ENCODE measurements at regions of chr6 and their contacts with region 1.

Region 1: DNA sequence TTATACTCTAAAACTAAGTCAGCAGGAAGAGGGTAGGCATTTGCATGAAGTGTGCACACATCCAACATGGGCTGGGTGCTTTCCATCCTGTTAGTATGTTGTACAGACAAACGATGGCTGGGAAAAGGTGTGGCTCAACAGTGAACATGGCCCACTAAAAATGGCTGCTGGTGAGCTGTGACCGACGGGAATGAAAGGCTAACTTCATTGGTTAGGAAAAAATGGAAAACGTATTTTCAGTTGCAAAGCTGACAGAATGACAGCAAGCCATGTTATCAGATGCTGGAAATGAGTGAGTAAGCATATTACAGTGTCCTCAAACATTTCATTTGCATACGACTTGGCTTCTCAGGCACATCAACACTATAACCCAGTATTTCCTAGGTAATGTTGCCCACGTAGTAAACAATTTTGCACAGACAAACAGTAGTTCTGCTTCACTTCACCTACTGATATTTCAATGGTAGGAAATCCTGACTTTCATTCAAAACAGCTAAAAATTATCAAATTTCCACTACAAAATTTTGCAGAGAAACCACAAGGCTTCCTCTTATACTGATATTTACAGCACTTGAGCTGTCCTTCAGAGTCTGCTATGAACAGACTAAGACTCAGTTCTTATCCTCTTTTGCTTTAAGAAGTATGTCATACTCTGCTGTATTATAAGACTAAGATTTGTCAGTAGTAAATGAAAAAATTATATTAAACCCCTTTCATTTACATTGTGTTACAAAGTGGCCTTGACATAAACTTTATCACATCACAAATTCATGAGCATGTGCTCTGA is 98.9 kb downstream of the IRF4 start:
- DNase-seq: no peak
- H3K4me3 Mint-ChIP-seq: peak overlapping the region; percentile 46
- H3K27ac Mint-ChIP-seq: peak overlapping the region; percentile 99
- H3K4me1 Mint-ChIP-seq: peaks cover 84% of the 10 kb centered on the region
- H3K27me3 Mint-ChIP-seq: no peaks in the 10 kb centered on the region

Region 2: GRCh38 chr6:188821-189655 is 301.4 kb before region 1 on chr6:
- intact Hi-C with region 1: loop called (anchors 2 kb)
- DNase-seq: peak; percentile 77
- H3K4me3 Mint-ChIP-seq: peak overlapping the region; percentile 20
- H3K27ac Mint-ChIP-seq: peak overlapping the region; percentile 71
- H3K4me1 Mint-ChIP-seq: peaks cover 46% of the 10 kb centered on the region
- H3K27me3 Mint-ChIP-seq: no peaks in the 10 kb centered on the region

Region 3: GRCh38 chr6:291697-292505 is 198.5 kb before region 1 on chr6 and contains the start of gene DUSP22:
- intact Hi-C with region 1: loop called (anchors 5 kb)
- DNase-seq: peak; percentile 78
- H3K4me3 Mint-ChIP-seq: peak within 1 kb of the TSS; percentile 91
- H3K27ac Mint-ChIP-seq: peak within 1 kb of the TSS; percentile 95
- H3K4me1 Mint-ChIP-seq: peaks cover 45% of the 10 kb centered on the region
- H3K27me3 Mint-ChIP-seq: no peaks in the 10 kb centered on the region
- total RNA-seq, gene DUSP22: 27.5 and 28.6 TPM in 2 replicates

Region 4: GRCh38 chr6:399785-400534 is 90.5 kb before region 1 on chr6:
- intact Hi-C with region 1: loop called (anchors 2 kb)
- DNase-seq: peak; percentile 57
- H3K4me3 Mint-ChIP-seq: peak overlapping the region; percentile 72
- H3K27ac Mint-ChIP-seq: peak overlapping the region; percentile 78
- H3K4me1 Mint-ChIP-seq: peaks cover 86% of the 10 kb centered on the region
- H3K27me3 Mint-ChIP-seq: no peaks in the 10 kb centered on the region

Region 5: GRCh38 chr6:431986-432385 is 58.5 kb before region 1 on chr6:
- intact Hi-C with region 1: loop called (anchors 1 kb)
- DNase-seq: peak; percentile 69
- H3K4me3 Mint-ChIP-seq: no peak overlapping the region
- H3K27ac Mint-ChIP-seq: peak overlapping the region; percentile 64
- H3K4me1 Mint-ChIP-seq: peaks cover 80% of the 10 kb centered on the region
- H3K27me3 Mint-ChIP-seq: no peaks in the 10 kb centered on the region

Region 6: DNA sequence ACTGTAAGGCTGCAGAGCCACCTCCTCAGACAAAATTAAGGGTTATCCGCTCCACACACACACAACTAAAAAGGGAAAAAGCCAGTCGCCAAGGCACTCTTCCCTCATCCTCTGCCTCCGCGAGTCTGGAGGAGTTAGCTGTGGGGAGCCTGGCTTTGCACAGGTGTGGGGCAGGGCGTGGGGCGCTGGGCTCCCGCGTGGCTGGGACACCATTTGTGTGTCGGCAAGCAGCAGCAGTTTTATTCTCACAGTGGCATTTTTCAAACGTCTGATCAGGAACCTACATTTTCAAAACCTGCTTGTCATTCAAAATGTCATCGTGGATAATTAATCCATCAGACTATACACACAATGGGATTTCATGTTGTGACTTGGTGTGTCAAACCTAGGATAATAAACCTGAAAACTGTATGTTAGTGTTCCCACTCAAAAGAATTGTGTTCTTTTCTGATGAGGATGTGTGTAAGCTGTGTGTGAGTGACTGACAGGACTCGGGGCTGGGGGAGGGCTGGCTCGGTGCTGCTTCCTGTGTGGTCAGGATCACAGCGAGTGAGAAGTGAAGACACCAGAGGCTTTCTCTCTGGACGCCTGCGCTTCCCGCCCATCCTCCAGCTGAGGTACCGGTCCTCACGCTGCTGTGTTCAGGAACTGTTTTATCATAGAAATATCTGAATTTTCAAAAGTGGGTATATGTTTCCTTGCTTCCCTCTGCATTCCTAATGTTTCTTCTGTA is 15.8 kb before region 1 on chr6:
- intact Hi-C with region 1: loop called (anchors 1 kb)
- DNase-seq: peak; percentile 77
- H3K4me3 Mint-ChIP-seq: peak overlapping the region; percentile 71
- H3K27ac Mint-ChIP-seq: peak overlapping the region; percentile 83
- H3K4me1 Mint-ChIP-seq: peaks cover 67% of the 10 kb centered on the region
- H3K27me3 Mint-ChIP-seq: no peaks in the 10 kb centered on the region

Region 7: DNA sequence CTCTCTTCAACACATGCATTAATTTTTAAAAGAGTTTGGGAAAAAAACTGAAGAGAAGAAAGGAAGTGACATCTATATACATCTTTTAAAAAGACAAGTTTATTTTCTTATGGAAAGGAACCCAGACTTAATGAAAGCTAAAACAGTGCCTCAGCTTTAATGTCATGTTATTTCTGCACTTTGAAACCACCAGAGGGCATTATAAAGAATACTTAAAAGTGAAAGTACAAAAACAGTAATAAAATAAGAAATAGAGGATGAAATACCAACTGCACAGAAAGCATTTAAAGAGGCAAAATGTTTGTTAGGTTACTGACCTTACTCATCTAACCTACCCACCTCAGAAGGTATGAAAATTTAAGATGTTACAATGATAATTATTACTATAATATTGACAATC is 67.6 kb after region 1 on chr6:
- intact Hi-C with region 1: loop called (anchors 1 kb)
- DNase-seq: no peak
- H3K4me3 Mint-ChIP-seq: no peak overlapping the region
- H3K27ac Mint-ChIP-seq: peak overlapping the region; percentile 88
- H3K4me1 Mint-ChIP-seq: peaks cover 63% of the 10 kb centered on the region
- H3K27me3 Mint-ChIP-seq: no peaks in the 10 kb centered on the region